ENCODE measurements at regions of chr7 and their contacts with region 1.

Region 1: GRCh38 chr7:39517240-39517639 is 49.0 kb upstream of the YAE1 start:
- DNase-seq: no peak
- ATAC-seq: no peak
- H3K4me3 ChIP-seq: no peak overlapping the region
- H3K4me3 Mint-ChIP-seq: no peak overlapping the region
- H3K27ac ChIP-seq: no peak overlapping the region
- H3K27ac Mint-ChIP-seq: no peak overlapping the region
- H3K4me1 ChIP-seq: no peaks in the 10 kb centered on the region
- H3K4me1 Mint-ChIP-seq: peaks cover 3% of the 10 kb centered on the region
- H3K27me3 ChIP-seq: peaks cover 0 to 5% of the 10 kb centered on the region in 2 experiments
- H3K27me3 Mint-ChIP-seq: peaks cover 8% of the 10 kb centered on the region
- CTCF ChIP-seq: no peak

Region 2: GRCh38 chr7:38796626-38797501 is 720.4 kb before region 1 on chr7:
- CTCF ChIA-PET with region 1: interaction called, 4 read pairs
- POLR2A ChIA-PET with region 1: no interaction called
- intact Hi-C with region 1: loop called (anchors 1 kb)
- DNase-seq: peak; percentile 4 to 63 (median 51)
- ATAC-seq: no peak
- H3K4me3 ChIP-seq: no peak overlapping the region
- H3K4me3 Mint-ChIP-seq: no peak overlapping the region
- H3K27ac ChIP-seq: no peak overlapping the region
- H3K27ac Mint-ChIP-seq: no peak overlapping the region
- H3K4me1 ChIP-seq: no peaks in the 10 kb centered on the region
- H3K4me1 Mint-ChIP-seq: no peaks in the 10 kb centered on the region
- H3K27me3 ChIP-seq: no peaks in the 10 kb centered on the region
- H3K27me3 Mint-ChIP-seq: no peaks in the 10 kb centered on the region
- CTCF ChIP-seq: peak; percentile 90

Region 3: GRCh38 chr7:38932509-38933168 is 584.6 kb before region 1 on chr7:
- CTCF ChIA-PET with region 1: no interaction called
- POLR2A ChIA-PET with region 1: no interaction called
- intact Hi-C with region 1: loop called in 1 of 2 experiments (anchors 2 kb)
- DNase-seq: peak in 7 of 9 experiments; percentile 5 to 46 (median 27)
- ATAC-seq: no peak
- H3K4me3 ChIP-seq: no peak overlapping the region
- H3K4me3 Mint-ChIP-seq: no peak overlapping the region
- H3K27ac ChIP-seq: no peak overlapping the region
- H3K27ac Mint-ChIP-seq: no peak overlapping the region
- H3K4me1 ChIP-seq: no peaks in the 10 kb centered on the region
- H3K4me1 Mint-ChIP-seq: no peaks in the 10 kb centered on the region
- H3K27me3 ChIP-seq: no peaks in the 10 kb centered on the region
- H3K27me3 Mint-ChIP-seq: peaks cover 10% of the 10 kb centered on the region
- CTCF ChIP-seq: peak; percentile 62

Region 4: DNA sequence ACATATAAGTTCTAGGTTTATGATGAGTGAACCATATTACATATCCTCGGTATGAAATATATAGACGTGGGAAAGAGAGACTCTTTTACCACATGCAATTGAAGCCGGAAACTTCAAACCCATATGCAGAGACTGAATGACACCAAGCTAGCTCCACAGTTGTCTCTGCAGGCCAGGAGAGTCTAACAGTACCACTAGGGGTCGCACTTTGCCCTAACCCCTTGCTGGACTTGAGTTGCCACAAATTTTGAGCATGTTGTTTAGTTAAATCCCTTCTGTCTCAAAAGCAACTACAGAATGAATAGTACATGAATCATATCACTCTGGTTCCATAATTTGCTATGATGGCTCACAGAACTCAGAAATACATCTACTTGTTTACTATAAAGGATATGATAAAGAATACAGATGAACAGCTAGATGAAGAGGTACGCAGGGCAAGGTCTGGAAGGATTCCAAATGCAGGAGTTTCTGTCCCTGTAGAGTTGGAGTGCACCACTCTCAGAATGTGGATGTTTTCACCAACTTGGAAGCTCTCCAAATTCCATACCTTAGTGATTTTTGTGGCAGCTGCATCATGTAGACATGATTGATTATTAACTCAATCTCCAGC is 63.4 kb before region 1 on chr7:
- CTCF ChIA-PET with region 1: interaction called, 5 read pairs
- POLR2A ChIA-PET with region 1: no interaction called
- intact Hi-C with region 1: loop called (anchors 1 to 2 kb)
- DNase-seq: peak; percentile 6 to 63 (median 46)
- ATAC-seq: peak; percentile 62
- H3K4me3 ChIP-seq: no peak overlapping the region
- H3K4me3 Mint-ChIP-seq: no peak overlapping the region
- H3K27ac ChIP-seq: no peak overlapping the region
- H3K27ac Mint-ChIP-seq: no peak overlapping the region
- H3K4me1 ChIP-seq: no peaks in the 10 kb centered on the region
- H3K4me1 Mint-ChIP-seq: no peaks in the 10 kb centered on the region
- H3K27me3 ChIP-seq: no peaks in the 10 kb centered on the region
- H3K27me3 Mint-ChIP-seq: peaks cover 15% of the 10 kb centered on the region
- CTCF ChIP-seq: peak; percentile 67

Region 5: GRCh38 chr7:41122256-41122987 is 1605.2 kb after region 1 on chr7:
- CTCF ChIA-PET with region 1: no interaction called
- POLR2A ChIA-PET with region 1: no interaction called
- intact Hi-C with region 1: no loop called
- DNase-seq: no peak
- ATAC-seq: no peak
- H3K4me3 ChIP-seq: no peak overlapping the region
- H3K4me3 Mint-ChIP-seq: no peak overlapping the region
- H3K27ac ChIP-seq: no peak overlapping the region
- H3K27ac Mint-ChIP-seq: no peak overlapping the region
- H3K4me1 ChIP-seq: no peaks in the 10 kb centered on the region
- H3K4me1 Mint-ChIP-seq: no peaks in the 10 kb centered on the region
- H3K27me3 ChIP-seq: no peaks in the 10 kb centered on the region
- H3K27me3 Mint-ChIP-seq: no peaks in the 10 kb centered on the region
- CTCF ChIP-seq: no peak